GM12878 (cell line): ENCODE measurements at regions of chr5 and their contacts with region 1.

Region 1: GRCh38 chr5:173144200-173145176 is at the start of gene BNIP1:
- DNase-seq: peak; percentile 84
- ATAC-seq: peak; percentile 96
- H3K4me3 ChIP-seq: peak within 1 kb of the TSS; percentile 94
- H3K27ac ChIP-seq: peak within 1 kb of the TSS; percentile 91
- H3K4me1 ChIP-seq: no peaks in the 10 kb centered on the region; the same call in 1 of the 2 replicates
- H3K27me3 ChIP-seq: no peaks in the 10 kb centered on the region
- CTCF ChIP-seq: peak; percentile 96 to 98 (median 98)
- EP300 ChIP-seq: no peak
- POLR2A ChIP-seq: peak; percentile 79
- RAD21 ChIP-seq: peak; percentile 60
- polyA plus RNA-seq, gene BNIP1: 56.3 to 62.5 TPM

Region 2: GRCh38 chr5:173057062-173057924 is 87.2 kb before region 1 on chr5:
- CTCF ChIA-PET with region 1: interaction called, 11 read pairs
- POLR2A ChIA-PET with region 1: interaction called, 5 read pairs
- RAD21 ChIA-PET with region 1: interaction called, 7 read pairs
- SMC1A ChIA-PET with region 1: interaction called, 6 read pairs
- in situ Hi-C with region 1: no loop called
- intact Hi-C with region 1: no loop called
- DNase-seq: peak; percentile 85
- ATAC-seq: peak; percentile 92
- H3K4me3 ChIP-seq: peak overlapping the region; percentile 93
- H3K27ac ChIP-seq: peak overlapping the region; percentile 97
- H3K4me1 ChIP-seq: peaks cover 18% of the 10 kb centered on the region
- H3K27me3 ChIP-seq: no peaks in the 10 kb centered on the region
- CTCF ChIP-seq: peak in 1 of 3 experiments; percentile 0; a peak in 1 of 6 replicates
- EP300 ChIP-seq: no peak
- POLR2A ChIP-seq: peak; percentile 72
- RAD21 ChIP-seq: no peak

Region 3: GRCh38 chr5:173217626-173218397 is 73.3 kb after region 1 on chr5:
- CTCF ChIA-PET with region 1: no interaction called
- POLR2A ChIA-PET with region 1: no interaction called
- RAD21 ChIA-PET with region 1: no interaction called
- SMC1A ChIA-PET with region 1: no interaction called
- in situ Hi-C with region 1: no loop called
- intact Hi-C with region 1: no loop called
- DNase-seq: no peak
- ATAC-seq: no peak
- H3K4me3 ChIP-seq: no peak overlapping the region
- H3K27ac ChIP-seq: no peak overlapping the region
- H3K4me1 ChIP-seq: no peaks in the 10 kb centered on the region
- H3K27me3 ChIP-seq: no peaks in the 10 kb centered on the region
- CTCF ChIP-seq: no peak
- EP300 ChIP-seq: no peak
- POLR2A ChIP-seq: no peak
- RAD21 ChIP-seq: no peak

Region 4: DNA sequence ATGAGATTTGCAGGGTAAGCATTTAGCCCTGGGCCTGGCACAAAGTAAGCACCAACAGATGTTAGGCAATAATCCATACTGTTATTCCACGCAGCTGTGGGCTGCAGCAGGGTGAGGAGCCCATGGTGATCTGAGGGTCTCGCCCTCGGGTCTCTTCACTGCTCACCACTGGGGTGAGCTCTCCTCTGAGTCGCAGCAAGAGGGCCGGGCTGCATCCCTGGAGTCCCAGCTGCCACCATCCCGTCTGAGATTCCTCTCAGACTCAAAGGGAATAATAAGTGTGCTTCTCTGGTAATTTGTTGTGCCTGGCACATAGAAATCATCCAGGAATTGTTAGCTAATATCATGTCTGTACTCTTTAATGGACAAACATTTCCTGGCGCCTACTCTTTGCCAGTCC is 83.6 kb after region 1 on chr5:
- CTCF ChIA-PET with region 1: no interaction called
- POLR2A ChIA-PET with region 1: no interaction called
- RAD21 ChIA-PET with region 1: no interaction called
- SMC1A ChIA-PET with region 1: no interaction called
- in situ Hi-C with region 1: no loop called
- intact Hi-C with region 1: no loop called
- DNase-seq: no peak
- ATAC-seq: no peak
- H3K4me3 ChIP-seq: no peak overlapping the region
- H3K27ac ChIP-seq: no peak overlapping the region
- H3K4me1 ChIP-seq: no peaks in the 10 kb centered on the region
- H3K27me3 ChIP-seq: peaks cover 18 to 20% of the 10 kb centered on the region in 2 experiments
- CTCF ChIP-seq: no peak
- EP300 ChIP-seq: no peak
- POLR2A ChIP-seq: no peak
- RAD21 ChIP-seq: no peak